ENCODE measurements at regions of chr6 and their contacts with region 1.

Region 1: DNA sequence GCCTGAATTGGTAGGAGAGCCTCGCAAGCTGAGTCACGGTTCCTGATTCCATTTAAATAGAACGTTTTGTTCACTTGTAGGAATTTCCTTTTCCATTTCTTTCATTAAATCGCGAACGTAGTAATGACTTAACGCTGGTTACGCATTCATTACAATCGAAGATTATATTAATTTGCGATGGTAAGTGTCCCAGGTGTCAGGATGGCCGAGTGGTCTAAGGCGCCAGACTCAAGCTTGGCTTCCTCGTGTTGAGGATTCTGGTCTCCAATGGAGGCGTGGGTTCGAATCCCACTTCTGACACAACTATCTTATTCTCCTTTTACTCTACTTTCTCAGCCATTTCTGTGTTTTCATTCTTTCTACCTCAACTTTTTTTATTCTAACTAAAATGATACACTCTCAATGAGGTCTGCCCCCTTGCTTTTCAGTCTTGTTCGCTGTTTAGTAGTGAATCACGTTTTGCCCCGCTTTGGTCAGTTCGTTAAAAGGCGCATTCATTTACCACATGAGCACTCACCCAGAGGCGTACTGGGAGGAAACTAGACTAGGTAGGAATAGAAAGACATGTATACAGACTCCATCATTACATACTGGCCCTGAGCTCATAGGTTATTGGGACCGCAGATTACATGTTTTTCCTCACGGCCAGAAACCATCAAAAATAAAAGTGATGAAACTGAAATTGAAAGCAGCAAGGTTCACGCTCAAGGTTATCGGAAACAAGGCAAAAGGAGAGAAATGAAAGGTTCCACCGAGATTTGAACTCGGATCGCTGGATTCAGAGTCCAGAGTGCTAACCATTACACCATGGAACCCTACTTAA is 17.3 kb upstream of the TRIM27 start:
- DNase-seq: peak; percentile 79 to 91 (median 82)
- H3K4me3 ChIP-seq: peak overlapping the region; percentile 67
- H3K27ac ChIP-seq: peak overlapping the region; percentile 80 to 81
- H3K4me1 ChIP-seq: peaks cover 2% of the 10 kb centered on the region
- H3K27me3 ChIP-seq: no peaks in the 10 kb centered on the region
- CTCF ChIP-seq: no peak
- EP300 ChIP-seq: no peak
- POLR2A ChIP-seq: no peak

Region 2: DNA sequence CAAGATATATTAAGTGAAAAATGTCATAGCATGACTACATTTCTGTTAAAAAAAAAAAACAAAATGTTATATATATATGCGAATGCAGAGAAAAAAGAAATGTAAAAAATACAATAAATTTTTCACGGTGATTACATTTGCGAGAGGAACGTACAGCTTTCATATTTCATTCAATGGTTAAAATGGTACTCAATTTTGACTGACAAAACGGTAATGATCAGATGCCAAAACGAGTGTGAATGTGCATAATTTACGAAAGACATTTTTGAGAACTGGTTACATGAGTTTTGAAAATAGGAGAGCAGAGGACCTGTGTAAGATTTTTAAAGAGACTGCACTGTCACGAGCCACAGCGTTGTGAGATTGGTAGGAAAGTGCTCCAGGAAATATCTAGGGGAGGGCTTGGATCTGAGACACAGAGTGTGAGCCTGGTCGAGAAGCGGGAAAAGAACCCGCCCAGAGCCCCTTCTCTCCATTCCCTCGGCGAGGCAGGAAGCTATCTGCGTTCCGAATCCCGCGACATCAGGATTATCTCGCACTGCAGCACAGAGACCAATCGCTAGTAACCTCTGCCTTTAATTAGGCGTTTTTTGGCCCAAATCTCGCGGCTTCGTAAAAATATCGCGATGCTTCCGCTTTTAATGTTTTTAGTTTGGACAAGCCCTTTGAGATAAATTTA is 45.8 kb before region 1 on chr6:
- intact Hi-C with region 1: loop called in 2 of 4 experiments (anchors 5 kb)
- DNase-seq: peak; percentile 90 to 97 (median 92)
- H3K4me3 ChIP-seq: peak overlapping the region; percentile 59
- H3K27ac ChIP-seq: peak overlapping the region; percentile 98 to 99
- H3K4me1 ChIP-seq: no peaks in the 10 kb centered on the region
- H3K27me3 ChIP-seq: no peaks in the 10 kb centered on the region
- CTCF ChIP-seq: no peak
- EP300 ChIP-seq: no peak
- POLR2A ChIP-seq: peak; percentile 58

Region 3: DNA sequence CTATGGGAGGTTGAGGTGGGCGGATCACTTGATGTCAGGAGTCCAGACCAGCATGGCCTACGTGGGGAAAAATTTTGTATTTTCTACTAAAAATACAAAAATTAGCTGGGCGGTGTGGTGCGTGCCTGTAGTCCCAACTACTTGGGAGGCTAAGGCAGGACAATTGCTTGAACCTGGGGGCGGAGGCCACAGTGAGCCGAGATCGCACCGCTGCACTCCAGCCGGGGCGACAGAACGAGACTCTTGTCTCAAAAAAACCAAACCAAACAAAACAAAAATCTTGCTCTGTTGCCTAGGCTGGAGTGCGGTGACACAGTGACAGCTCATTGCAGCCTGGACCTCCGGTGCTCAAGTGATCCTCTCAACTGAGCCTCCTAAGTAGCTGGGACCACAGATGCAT is 87.8 kb after region 1 on chr6:
- intact Hi-C with region 1: no loop called
- DNase-seq: no peak
- H3K4me3 ChIP-seq: no peak overlapping the region
- H3K27ac ChIP-seq: no peak overlapping the region
- H3K4me1 ChIP-seq: no peaks in the 10 kb centered on the region
- H3K27me3 ChIP-seq: no peaks in the 10 kb centered on the region
- CTCF ChIP-seq: no peak
- EP300 ChIP-seq: no peak
- POLR2A ChIP-seq: no peak

Measured in ovary (tissue), 10 donors.